ENCODE measurements at regions of chr15 and their contacts with region 1.

Region 1: DNA sequence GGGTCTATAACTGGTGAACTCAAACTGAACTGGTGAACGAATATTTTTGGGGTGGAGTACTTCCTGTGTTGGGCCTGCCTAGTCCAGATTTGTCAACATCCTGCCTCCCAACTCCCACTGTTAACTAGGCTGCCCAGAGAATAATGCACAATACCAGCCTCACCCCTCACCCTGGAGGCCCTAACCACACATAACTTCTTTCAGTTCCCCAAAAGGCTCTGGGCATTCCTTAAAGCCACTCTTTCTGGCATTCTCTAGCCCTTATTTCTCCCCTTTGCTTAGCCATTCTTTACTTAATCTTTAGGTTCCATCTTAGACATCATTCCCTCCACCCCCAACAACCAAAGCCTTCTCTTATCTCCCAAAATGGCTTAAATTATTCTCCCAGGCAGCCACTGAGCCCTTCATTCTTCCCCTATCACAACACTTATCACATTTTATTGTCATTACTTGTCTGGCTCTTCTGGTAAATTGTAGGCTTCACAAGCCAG is 9.1 kb upstream of the SEC11A start:
- DNase-seq: peak in 1 of 2 experiments; percentile 26
- H3K4me3 ChIP-seq: no peak overlapping the region
- H3K27ac ChIP-seq: peak overlapping the region; percentile 66
- H3K4me1 ChIP-seq: peaks cover 16% of the 10 kb centered on the region
- H3K27me3 ChIP-seq: no peaks in the 10 kb centered on the region
- CTCF ChIP-seq: no peak

Region 2: GRCh38 chr15:83992324-83993031 is 732.6 kb before region 1 on chr15:
- CTCF ChIA-PET with region 1: no interaction called
- POLR2A ChIA-PET with region 1: no interaction called
- intact Hi-C with region 1: no loop called
- DNase-seq: no peak
- H3K4me3 ChIP-seq: no peak overlapping the region
- H3K27ac ChIP-seq: no peak overlapping the region
- H3K4me1 ChIP-seq: no peaks in the 10 kb centered on the region
- H3K27me3 ChIP-seq: no peaks in the 10 kb centered on the region
- CTCF ChIP-seq: no peak

Region 3: DNA sequence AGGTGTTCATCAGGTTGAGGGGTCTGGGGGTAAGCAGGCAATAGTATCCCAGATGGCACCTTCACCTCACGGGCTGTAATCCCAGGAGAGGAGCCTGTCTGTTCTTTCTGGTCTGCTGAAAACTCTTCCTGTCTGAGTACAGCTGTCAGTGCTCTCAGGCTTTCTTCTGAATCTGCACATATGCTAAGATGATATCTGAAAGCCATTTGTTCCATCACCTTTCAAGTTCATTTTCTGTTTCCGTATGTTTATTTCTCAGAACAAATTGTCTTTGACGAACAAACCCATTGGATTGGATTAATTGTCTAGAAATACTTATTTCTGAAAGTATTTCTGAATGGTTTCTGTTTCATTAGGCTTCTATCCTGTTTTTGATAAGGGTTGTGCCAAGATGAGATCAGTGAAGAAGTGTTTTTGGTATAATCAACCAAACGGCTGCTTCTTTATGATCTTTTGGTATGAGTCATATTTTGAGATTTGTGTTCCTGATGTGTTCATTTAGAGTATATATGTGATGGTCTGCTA is 36.6 kb after region 1 on chr15:
- CTCF ChIA-PET with region 1: no interaction called
- POLR2A ChIA-PET with region 1: interaction called, 18 read pairs
- intact Hi-C with region 1: no loop called
- DNase-seq: no peak
- H3K4me3 ChIP-seq: no peak overlapping the region
- H3K27ac ChIP-seq: no peak overlapping the region
- H3K4me1 ChIP-seq: no peaks in the 10 kb centered on the region
- H3K27me3 ChIP-seq: no peaks in the 10 kb centered on the region
- CTCF ChIP-seq: no peak

Region 4: GRCh38 chr15:84797212-84797611 is 72.2 kb after region 1 on chr15:
- CTCF ChIA-PET with region 1: no interaction called
- POLR2A ChIA-PET with region 1: no interaction called
- intact Hi-C with region 1: no loop called
- DNase-seq: no peak
- H3K4me3 ChIP-seq: no peak overlapping the region
- H3K27ac ChIP-seq: no peak overlapping the region
- H3K4me1 ChIP-seq: no peaks in the 10 kb centered on the region
- H3K27me3 ChIP-seq: no peaks in the 10 kb centered on the region
- CTCF ChIP-seq: no peak

Measured in PC-9 (cell line).